Posterior vena cava (tissue), 2 donors: ENCODE measurements at regions of chr16 and their contacts with region 1.

Region 1: DNA sequence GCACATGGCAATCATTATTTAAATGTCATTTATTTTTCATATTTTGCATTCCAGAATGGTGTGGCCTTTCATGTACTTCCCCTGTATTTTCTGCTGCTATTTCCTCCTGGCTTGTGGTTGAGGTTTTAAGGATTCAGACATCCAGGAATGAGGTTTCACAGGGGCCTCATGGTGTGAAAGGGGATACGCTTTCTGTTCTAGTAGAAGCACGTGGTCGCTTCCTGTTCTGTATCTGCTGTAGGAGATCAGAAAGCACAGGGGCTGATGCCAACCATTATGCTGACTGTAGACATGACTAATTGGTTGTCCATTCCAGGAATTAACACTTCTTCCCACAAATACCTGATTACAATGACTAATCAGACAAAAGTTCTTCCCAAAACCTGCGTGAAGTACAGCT is 405.9 kb downstream of the SHISA9 start:
- DNase-seq: no peak

Region 2: DNA sequence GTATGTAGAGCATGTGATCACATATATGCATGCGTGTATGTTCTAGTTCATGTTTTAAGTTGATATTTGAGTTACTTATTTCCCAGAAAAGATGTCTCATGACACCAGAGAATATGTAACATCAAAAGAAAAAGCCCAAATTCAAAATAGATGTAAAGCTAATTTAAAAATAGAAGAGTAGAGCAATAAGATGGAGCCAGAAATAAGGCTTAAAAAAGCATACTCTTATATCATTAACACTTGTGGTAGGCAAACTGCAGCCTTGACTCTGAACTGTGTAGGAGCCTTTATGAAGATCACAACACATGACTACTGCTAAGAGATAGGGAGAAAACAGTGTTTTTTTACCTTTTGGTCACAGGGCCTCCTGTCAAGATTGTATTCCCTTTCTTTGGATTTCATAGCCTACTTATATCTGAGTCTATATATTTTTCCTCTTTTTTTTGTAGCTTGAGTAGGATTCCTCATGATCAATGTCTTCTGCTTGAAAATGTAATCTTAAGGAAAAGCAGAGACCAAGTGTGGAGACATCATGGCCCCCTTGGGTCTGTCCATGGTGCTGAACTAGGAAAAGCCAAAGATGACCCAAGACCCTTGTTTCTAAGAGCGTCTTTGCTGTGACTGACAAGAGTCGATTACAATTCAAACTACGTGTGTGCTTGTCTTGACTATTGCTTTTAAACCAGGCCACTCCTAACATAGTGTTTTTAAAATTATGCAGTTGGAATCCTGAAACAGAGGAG is 15.5 kb before region 1 on chr16:
- intact Hi-C with region 1: loop called in 1 of 2 experiments (anchors 1 kb)
- DNase-seq: no peak